ENCODE measurements at regions of chr9 and their contacts with region 1.

Region 1: GRCh38 chr9:92764988-92765936 is 629 bp upstream of the BICD2 start:
- DNase-seq: peak; percentile 99
- H3K4me3 ChIP-seq: peak overlapping the region; percentile 82 to 100 (median 98)
- H3K27ac ChIP-seq: peak overlapping the region; percentile 98 to 100 (median 100)
- H3K4me1 ChIP-seq: peaks cover 45 to 52% (median 48%) of the 10 kb centered on the region in 4 donors
- H3K27me3 ChIP-seq: no peaks in the 10 kb centered on the region
- CTCF ChIP-seq: peak; percentile 89 to 94 (median 90)
- EP300 ChIP-seq: no peak
- POLR2A ChIP-seq: peak; percentile 92

Region 2: GRCh38 chr9:92654481-92655301 is 110.6 kb before region 1 on chr9:
- intact Hi-C with region 1: no loop called
- DNase-seq: no peak
- H3K4me3 ChIP-seq: no peak overlapping the region
- H3K27ac ChIP-seq: no peak overlapping the region
- H3K4me1 ChIP-seq: peaks cover 6 to 35% (median 27%) of the 10 kb centered on the region in 4 donors
- H3K27me3 ChIP-seq: no peaks in the 10 kb centered on the region
- CTCF ChIP-seq: no peak
- EP300 ChIP-seq: no peak
- POLR2A ChIP-seq: no peak

Region 3: GRCh38 chr9:92669890-92670708 is 95.2 kb before region 1 on chr9 and contains the start of gene IPPK:
- intact Hi-C with region 1: loop called (anchors 2 kb)
- DNase-seq: peak; percentile 99
- H3K4me3 ChIP-seq: peak within 1 kb of the TSS; percentile 61 to 91 (median 75)
- H3K27ac ChIP-seq: peak within 1 kb of the TSS; percentile 81 to 93 (median 87)
- H3K4me1 ChIP-seq: peaks cover 25 to 53% (median 31%) of the 10 kb centered on the region in 4 donors
- H3K27me3 ChIP-seq: no peaks in the 10 kb centered on the region
- CTCF ChIP-seq: no peak
- EP300 ChIP-seq: peak; percentile 52
- POLR2A ChIP-seq: peak; percentile 46
- total RNA-seq, gene IPPK: 5.0 to 8.4 (median 6.1) TPM